ENCODE measurements at regions of chr3 and their contacts with region 1.

Region 1: DNA sequence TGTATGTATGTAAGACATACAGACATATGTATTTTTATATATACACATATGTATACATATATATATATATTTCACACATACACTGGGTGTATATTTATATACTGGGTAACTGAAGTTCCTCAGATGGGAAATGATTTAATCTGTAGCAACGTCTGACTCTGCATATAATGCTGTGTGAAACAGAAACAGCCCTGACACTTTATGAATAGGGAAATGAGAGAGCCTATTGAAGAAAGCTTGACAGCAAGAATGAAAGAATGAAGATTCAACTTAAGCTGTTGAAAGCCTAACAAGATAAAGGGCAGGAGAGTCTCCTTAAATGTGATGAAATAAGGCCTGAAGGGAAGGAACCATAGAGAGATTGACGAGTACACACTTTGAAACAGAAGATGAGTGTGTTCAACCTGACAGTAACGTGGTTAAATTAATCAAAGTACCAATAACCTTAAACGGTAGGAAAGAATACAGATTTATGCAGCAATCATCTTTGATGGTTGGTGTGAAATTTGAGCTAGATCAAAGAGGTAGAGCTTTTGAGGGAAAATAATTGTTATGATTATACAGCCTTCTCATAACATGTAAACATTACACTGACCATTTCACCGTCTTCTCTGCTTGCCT is 169.9 kb downstream of the MECOM start:
- DNase-seq: no peak
- H3K4me3 ChIP-seq: no peak overlapping the region
- CTCF ChIP-seq: no peak
- POLR2A ChIP-seq: no peak

Region 2: DNA sequence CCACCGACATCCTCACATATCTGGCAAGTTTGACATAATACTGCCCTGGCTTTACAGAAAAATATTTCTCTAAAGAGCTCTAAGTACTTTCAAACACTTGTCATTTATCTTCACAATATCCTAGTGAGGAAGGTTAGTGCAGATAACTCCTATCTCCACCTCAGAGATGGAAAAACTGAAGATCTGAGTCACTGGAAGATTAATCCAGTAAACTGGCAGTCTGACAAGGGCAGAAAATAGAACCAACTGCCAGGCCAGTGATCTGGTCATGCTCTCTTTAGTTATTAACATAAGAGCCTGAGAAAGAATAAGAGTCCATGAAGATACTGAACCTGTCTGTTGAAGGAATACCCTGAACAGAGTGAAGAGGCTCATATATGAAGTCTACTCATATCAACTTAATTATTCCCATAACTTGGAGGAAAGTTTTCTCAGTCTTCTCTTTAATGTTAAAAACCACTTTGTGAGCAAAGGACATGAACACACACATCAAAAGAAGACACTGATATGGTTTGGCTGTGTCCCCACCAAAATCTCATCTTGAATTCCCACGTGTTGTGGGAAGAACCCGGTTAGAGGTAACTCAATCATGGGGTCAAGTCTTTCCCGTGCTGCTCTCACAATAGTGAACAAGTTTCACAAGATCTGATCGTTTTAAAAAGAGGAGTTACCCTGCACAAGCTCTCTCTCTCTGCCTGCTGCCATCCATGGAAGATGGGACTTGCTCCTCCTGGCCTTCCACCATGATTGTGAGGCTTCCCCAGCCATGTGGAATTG is 1459.3 kb before region 1 on chr3:
- intact Hi-C with region 1: loop called (anchors 5 kb)
- DNase-seq: peak in 1 of 2 donors; percentile 19
- H3K4me3 ChIP-seq: no peak overlapping the region
- CTCF ChIP-seq: no peak
- POLR2A ChIP-seq: no peak

Region 3: DNA sequence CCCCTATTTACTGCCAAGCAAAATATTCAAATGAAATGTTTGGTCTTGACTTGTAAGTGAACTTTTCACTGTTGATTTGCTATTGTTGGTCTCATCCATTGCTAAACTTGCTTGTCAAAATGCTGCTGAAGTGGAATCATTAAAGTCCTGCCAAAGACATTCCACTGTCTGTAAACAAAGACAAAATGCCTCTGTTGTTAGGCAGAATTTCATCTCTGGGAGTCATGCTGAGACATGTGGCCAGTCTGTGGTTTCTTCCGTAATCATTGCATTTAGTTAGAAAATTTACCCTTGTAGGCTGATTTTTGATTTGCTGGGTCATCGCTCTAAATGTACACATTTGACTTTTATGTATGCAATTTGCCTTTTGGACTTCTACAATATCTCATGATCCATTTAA is 407.8 kb before region 1 on chr3:
- intact Hi-C with region 1: no loop called
- DNase-seq: peak in 1 of 2 donors; percentile 25
- H3K4me3 ChIP-seq: no peak overlapping the region
- CTCF ChIP-seq: no peak
- POLR2A ChIP-seq: no peak

Region 4: GRCh38 chr3:169772897-169773828 is 279.5 kb after region 1 on chr3 and contains the start of gene MYNN:
- intact Hi-C with region 1: no loop called
- DNase-seq: peak; percentile 91 to 99
- H3K4me3 ChIP-seq: peak within 1 kb of the TSS; percentile 95
- CTCF ChIP-seq: no peak
- POLR2A ChIP-seq: peak in 1 of 2 donors; percentile 98
- total RNA-seq, gene MYNN: 13.2 to 16.6 (median 14.8) TPM

Measured in lower leg skin (tissue), 4 donors.